H1 (cell line): ENCODE measurements at regions of chr15 and their contacts with region 1.

Region 1: GRCh38 chr15:33963831-33964664 is 4.2 kb upstream of the CHRM5 start:
- DNase-seq: no peak
- H3K4me3 ChIP-seq: no peak overlapping the region
- H3K27ac ChIP-seq: no peak overlapping the region
- H3K4me1 ChIP-seq: no peaks in the 10 kb centered on the region
- H3K27me3 ChIP-seq: no peaks in the 10 kb centered on the region
- CTCF ChIP-seq: peak in 2 of 3 experiments; percentile 51 to 67; a peak in 2 of 4 replicates
- EP300 ChIP-seq: no peak
- POLR2A ChIP-seq: no peak
- RAD21 ChIP-seq: peak; percentile 80

Region 2: DNA sequence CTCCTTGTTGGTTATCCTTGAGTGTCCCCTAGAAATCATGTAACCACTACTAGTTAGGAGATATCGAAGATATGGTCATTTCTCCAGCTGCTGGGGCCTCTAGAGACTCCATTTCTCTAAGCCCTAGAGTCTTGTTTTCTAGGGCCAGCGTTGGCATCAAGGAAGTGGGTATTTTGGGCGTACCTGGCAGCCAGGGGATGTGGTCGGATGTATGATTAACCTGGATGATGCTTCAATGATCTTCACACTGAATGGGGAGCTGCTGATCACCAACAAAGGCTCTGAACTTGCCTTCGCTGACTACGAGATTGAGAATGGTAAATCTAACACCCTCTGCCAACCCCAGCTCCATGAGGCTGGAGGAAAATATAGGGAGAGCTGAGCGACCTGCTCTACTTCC is 327.8 kb before region 1 on chr15:
- CTCF ChIA-PET with region 1: no interaction called
- POLR2A ChIA-PET with region 1: no interaction called
- DNase-seq: no peak
- H3K4me3 ChIP-seq: no peak overlapping the region
- H3K27ac ChIP-seq: no peak overlapping the region
- H3K4me1 ChIP-seq: no peaks in the 10 kb centered on the region
- H3K27me3 ChIP-seq: no peaks in the 10 kb centered on the region
- CTCF ChIP-seq: no peak
- EP300 ChIP-seq: no peak
- POLR2A ChIP-seq: no peak
- RAD21 ChIP-seq: no peak

Region 3: DNA sequence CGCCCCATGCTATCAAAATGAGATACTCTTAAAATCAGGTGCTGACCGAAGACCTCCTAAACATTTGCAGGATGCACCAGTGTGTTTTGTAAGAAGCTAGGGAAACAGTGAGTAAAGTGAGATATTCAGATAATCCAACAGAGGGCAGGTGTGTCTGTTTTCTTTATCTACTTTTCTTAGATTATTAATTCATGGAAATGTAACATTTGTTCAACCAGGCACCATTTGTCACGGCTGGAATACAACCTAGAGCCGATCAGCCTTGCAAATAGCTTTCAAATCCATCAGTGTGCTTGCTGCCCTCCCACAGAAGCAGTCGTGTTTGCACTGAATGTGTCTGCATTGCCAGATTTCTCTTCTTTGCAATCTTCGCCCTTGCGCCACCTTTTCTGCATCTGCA is 197.7 kb before region 1 on chr15:
- CTCF ChIA-PET with region 1: interaction called, 11 read pairs
- POLR2A ChIA-PET with region 1: interaction called, 5 read pairs
- DNase-seq: no peak
- H3K4me3 ChIP-seq: no peak overlapping the region
- H3K27ac ChIP-seq: no peak overlapping the region
- H3K4me1 ChIP-seq: no peaks in the 10 kb centered on the region; a peak in 2 of 7 replicates
- H3K27me3 ChIP-seq: no peaks in the 10 kb centered on the region
- CTCF ChIP-seq: peak in 1 of 3 experiments; percentile 12; a peak in 1 of 4 replicates
- EP300 ChIP-seq: no peak
- POLR2A ChIP-seq: no peak
- RAD21 ChIP-seq: peak; percentile 21 to 22; a peak in 3 of 4 replicates